ENCODE measurements at regions of chr3 and their contacts with region 1.

Region 1: GRCh38 chr3:37855363-37855970 is 6.2 kb upstream of the CTDSPL start:
- DNase-seq: peak; percentile 78 to 96 (median 91)
- ATAC-seq: peak; percentile 69
- H3K4me3 ChIP-seq: no peak overlapping the region
- H3K4me1 ChIP-seq: peaks cover 10% of the 10 kb centered on the region
- CTCF ChIP-seq: peak; percentile 72

Region 2: GRCh38 chr3:37967260-37967881 is 111.9 kb after region 1 on chr3:
- intact Hi-C with region 1: loop called (anchors 2 to 5 kb)
- DNase-seq: peak; percentile 69 to 89 (median 82)
- ATAC-seq: peak; percentile 68
- H3K4me3 ChIP-seq: no peak overlapping the region
- H3K4me1 ChIP-seq: peaks cover 19% of the 10 kb centered on the region
- CTCF ChIP-seq: peak; percentile 63

Measured in mucosa of descending colon (tissue), 3 donors.